ENCODE measurements at regions of chr2 and their contacts with region 1.

Region 1: GRCh38 chr2:111897924-111898702 is at the start of gene MERTK:
- DNase-seq: peak; percentile 91 to 95 (median 91)
- H3K4me3 ChIP-seq: peak within 1 kb of the TSS; percentile 76 to 97 (median 87)
- H3K27ac ChIP-seq: peak within 1 kb of the TSS; percentile 42 to 95 (median 85)
- H3K4me1 ChIP-seq: peaks cover 0 to 40% of the 10 kb centered on the region in 2 donors
- H3K27me3 ChIP-seq: no peaks in the 10 kb centered on the region
- CTCF ChIP-seq: peak; percentile 10 to 55 (median 42)
- POLR2A ChIP-seq: peak; percentile 94 to 96
- total RNA-seq, gene MERTK: 33.3 to 152 (median 76.5) TPM

Region 2: DNA sequence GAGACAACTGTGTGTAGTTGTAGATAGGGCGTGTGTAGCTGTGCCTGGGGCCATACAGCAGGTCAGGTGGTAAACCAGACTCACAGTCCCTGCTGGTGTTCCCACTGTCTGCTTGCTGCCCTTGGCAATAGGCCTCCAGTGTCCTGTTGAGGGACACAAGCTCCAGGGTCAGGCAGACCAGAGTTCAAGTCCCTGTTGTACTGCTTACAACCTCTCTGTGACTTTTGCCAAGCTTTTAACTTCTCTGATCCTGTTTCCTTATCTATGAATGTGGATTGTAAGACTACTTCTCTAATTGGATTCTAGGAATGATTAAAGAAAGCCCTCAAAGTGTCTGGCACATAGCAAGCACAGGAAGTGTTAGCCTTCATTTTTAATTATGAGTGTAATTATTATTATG is 68.9 kb after region 1 on chr2:
- intact Hi-C with region 1: loop called in 1 of 2 experiments (anchors 10 kb)
- DNase-seq: peak in 1 of 7 donors; percentile 32
- H3K4me3 ChIP-seq: no peak overlapping the region
- H3K27ac ChIP-seq: peak overlapping the region in 2 of 5 donors; percentile 28 to 55
- H3K4me1 ChIP-seq: peaks cover 0 to 19% of the 10 kb centered on the region in 2 donors
- H3K27me3 ChIP-seq: no peaks in the 10 kb centered on the region
- CTCF ChIP-seq: no peak
- POLR2A ChIP-seq: no peak

Region 3: DNA sequence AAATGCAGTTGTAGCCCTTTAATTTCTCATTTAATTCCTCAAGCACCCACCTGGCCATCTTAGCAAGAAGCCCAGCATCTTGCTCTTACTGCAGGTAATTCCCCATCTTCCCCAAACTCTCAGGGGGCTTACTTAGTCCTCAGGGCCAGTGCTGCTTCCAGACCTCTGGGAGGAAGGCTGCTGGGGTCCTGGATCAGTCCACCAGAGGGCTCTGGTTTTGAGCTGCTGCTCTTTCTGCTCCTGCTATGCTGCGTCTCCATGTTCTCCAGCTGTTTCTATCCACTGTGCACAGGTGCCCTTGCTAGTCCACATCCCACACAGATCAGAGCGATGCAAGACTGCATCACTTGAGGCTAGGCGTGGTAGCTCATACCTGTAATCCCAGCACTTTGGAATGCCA is 122.4 kb after region 1 on chr2:
- intact Hi-C with region 1: loop called in 1 of 2 experiments (anchors 10 kb)
- DNase-seq: peak in 1 of 7 donors; percentile 13
- H3K4me3 ChIP-seq: no peak overlapping the region
- H3K27ac ChIP-seq: no peak overlapping the region
- H3K4me1 ChIP-seq: peaks cover 0 to 28% of the 10 kb centered on the region in 2 donors
- H3K27me3 ChIP-seq: no peaks in the 10 kb centered on the region
- CTCF ChIP-seq: no peak
- POLR2A ChIP-seq: no peak

Region 4: DNA sequence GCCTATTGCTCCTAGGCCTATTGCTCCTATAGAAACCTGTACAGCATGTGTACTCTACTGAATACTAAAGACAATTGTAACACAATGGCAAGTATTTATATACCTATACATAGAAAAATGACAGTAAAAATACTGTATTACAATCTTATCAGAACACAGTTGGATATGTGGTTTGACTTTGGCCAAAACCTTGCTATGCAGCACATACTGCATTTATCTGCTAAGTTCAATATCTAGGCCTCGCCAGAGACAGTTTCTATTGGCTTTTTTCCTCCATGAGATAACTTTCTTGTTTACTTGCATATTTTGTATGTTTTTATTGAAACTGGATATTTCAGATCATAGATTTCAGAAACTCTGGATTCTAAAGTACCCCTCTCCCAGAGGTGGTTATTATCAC is 137.7 kb after region 1 on chr2:
- intact Hi-C with region 1: loop called in 1 of 2 experiments (anchors 5 kb)
- DNase-seq: no peak
- H3K4me3 ChIP-seq: no peak overlapping the region
- H3K27ac ChIP-seq: no peak overlapping the region
- H3K4me1 ChIP-seq: peaks cover 8 to 33% of the 10 kb centered on the region in 2 donors
- H3K27me3 ChIP-seq: no peaks in the 10 kb centered on the region
- CTCF ChIP-seq: no peak
- POLR2A ChIP-seq: no peak

Region 5: DNA sequence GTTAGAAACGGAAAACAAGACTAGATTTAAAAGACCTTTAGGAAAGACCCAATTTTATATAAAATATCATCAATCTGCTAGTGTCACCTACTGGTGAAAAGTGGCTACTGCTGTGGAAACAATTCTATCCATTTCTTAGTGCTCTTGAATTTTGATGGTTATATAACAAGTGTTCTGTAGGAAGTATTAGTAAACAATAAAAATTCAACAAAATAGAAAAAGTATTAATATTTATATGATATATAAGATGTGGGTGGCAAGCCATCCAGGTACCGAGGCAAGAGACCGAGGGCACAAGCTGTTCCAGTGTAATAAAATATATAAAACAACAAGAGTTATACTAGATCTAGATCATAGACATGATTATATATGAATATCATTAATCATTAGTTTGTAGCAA is 150.8 kb after region 1 on chr2:
- intact Hi-C with region 1: loop called (anchors 5 kb)
- DNase-seq: peak in 3 of 7 donors; percentile 54 to 66 (median 57)
- H3K4me3 ChIP-seq: no peak overlapping the region
- H3K27ac ChIP-seq: no peak overlapping the region
- H3K4me1 ChIP-seq: peaks cover 22 to 25% of the 10 kb centered on the region in 2 donors
- H3K27me3 ChIP-seq: no peaks in the 10 kb centered on the region
- CTCF ChIP-seq: peak; percentile 81 to 92 (median 88)
- POLR2A ChIP-seq: no peak

Region 6: GRCh38 chr2:112259509-112260294 is 361.6 kb after region 1 on chr2:
- intact Hi-C with region 1: loop called in 1 of 2 experiments (anchors 10 kb)
- DNase-seq: peak; percentile 82 to 94 (median 86)
- H3K4me3 ChIP-seq: peak overlapping the region in 1 of 4 donors; percentile 46
- H3K27ac ChIP-seq: no peak overlapping the region
- H3K4me1 ChIP-seq: peaks cover 0 to 7% of the 10 kb centered on the region in 2 donors
- H3K27me3 ChIP-seq: no peaks in the 10 kb centered on the region
- CTCF ChIP-seq: peak; percentile 85 to 98 (median 96)
- POLR2A ChIP-seq: no peak

Measured in adrenal gland (tissue), 19 donors.